ENCODE measurements at regions of chr14 and their contacts with region 1.

Region 1: DNA sequence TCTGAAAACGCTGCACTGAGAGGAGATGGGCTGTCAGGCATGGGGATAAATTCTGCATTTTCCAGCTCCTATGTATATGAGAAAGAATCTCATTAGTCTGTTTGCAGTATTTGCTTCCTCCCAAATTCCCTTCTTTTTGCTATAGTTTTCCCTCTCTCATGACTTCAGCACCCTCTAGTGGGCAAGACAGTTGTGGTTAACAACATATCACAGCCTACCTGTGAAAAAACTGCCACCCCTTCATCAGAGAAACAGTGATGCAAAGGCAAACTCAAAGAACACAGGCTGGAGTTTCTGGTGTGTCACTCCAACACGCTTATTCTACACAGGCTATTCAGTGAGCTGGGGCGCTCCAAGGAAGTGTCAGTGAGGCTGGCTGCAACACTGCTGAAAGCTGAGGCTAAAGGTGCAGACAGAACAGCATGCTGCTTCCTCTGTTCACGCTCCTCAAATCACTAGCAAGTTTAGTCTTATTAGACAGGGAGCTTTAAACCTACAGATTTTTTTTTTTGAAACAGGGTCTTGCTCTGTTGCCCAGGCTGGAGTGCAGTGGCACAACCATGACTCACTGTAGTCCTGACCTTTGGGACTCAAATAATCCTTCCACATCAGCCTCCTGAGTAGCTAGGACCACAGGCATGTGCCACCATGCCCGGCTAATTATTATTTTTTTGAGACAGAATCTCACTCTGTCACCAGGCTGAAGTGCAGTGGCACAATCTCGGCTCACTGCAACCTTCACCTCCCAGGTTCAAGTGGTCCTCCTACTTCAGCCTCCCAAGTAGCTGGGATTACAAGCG is 19.3 kb downstream of the ZC2HC1C start:
- DNase-seq: peak in 1 of 2 donors; percentile 9
- ATAC-seq: peak; percentile 44 to 58
- H3K4me3 ChIP-seq: no peak overlapping the region
- H3K27ac ChIP-seq: no peak overlapping the region
- H3K4me1 ChIP-seq: peaks cover 0 to 13% of the 10 kb centered on the region in 2 donors
- H3K27me3 ChIP-seq: no peaks in the 10 kb centered on the region
- CTCF ChIP-seq: peak; percentile 72 to 83 (median 77)
- POLR2A ChIP-seq: no peak

Region 2: GRCh38 chr14:74723134-74723533 is 365.6 kb before region 1 on chr14:
- in situ Hi-C with region 1: no loop called
- intact Hi-C with region 1: no loop called
- DNase-seq: no peak
- ATAC-seq: no peak
- H3K4me3 ChIP-seq: no peak overlapping the region
- H3K27ac ChIP-seq: peak overlapping the region in 1 of 4 donors; percentile 6
- H3K4me1 ChIP-seq: no peaks in the 10 kb centered on the region
- H3K27me3 ChIP-seq: no peaks in the 10 kb centered on the region
- CTCF ChIP-seq: no peak
- POLR2A ChIP-seq: no peak

Region 3: GRCh38 chr14:74913986-74914573 is 174.7 kb before region 1 on chr14:
- in situ Hi-C with region 1: loop called in 2 of 4 experiments (anchors 10 kb)
- intact Hi-C with region 1: loop called (anchors 2 kb)
- DNase-seq: peak; percentile 69 to 77
- ATAC-seq: peak; percentile 67 to 70
- H3K4me3 ChIP-seq: no peak overlapping the region
- H3K27ac ChIP-seq: peak overlapping the region; percentile 29 to 64 (median 52)
- H3K4me1 ChIP-seq: peaks cover 43 to 45% of the 10 kb centered on the region in 2 donors
- H3K27me3 ChIP-seq: no peaks in the 10 kb centered on the region
- CTCF ChIP-seq: peak; percentile 70 to 86 (median 82)
- POLR2A ChIP-seq: no peak

Region 4: GRCh38 chr14:75002392-75003249 is 86.2 kb before region 1 on chr14 and contains the start of gene EIF2B2:
- in situ Hi-C with region 1: no loop called
- intact Hi-C with region 1: loop called (anchors 5 kb)
- DNase-seq: peak; percentile 97 to 98
- ATAC-seq: peak; percentile 98 to 99
- H3K4me3 ChIP-seq: peak within 1 kb of the TSS; percentile 75 to 95 (median 89)
- H3K27ac ChIP-seq: peak within 1 kb of the TSS; percentile 82 to 94 (median 87)
- H3K4me1 ChIP-seq: peaks cover 12 to 14% of the 10 kb centered on the region in 2 donors
- H3K27me3 ChIP-seq: no peaks in the 10 kb centered on the region
- CTCF ChIP-seq: peak in 4 of 5 experiments; percentile 27 to 37 (median 33)
- POLR2A ChIP-seq: peak; percentile 67 to 80
- total RNA-seq, gene EIF2B2: 42.7 to 79.0 (median 69.9) TPM

Region 5: DNA sequence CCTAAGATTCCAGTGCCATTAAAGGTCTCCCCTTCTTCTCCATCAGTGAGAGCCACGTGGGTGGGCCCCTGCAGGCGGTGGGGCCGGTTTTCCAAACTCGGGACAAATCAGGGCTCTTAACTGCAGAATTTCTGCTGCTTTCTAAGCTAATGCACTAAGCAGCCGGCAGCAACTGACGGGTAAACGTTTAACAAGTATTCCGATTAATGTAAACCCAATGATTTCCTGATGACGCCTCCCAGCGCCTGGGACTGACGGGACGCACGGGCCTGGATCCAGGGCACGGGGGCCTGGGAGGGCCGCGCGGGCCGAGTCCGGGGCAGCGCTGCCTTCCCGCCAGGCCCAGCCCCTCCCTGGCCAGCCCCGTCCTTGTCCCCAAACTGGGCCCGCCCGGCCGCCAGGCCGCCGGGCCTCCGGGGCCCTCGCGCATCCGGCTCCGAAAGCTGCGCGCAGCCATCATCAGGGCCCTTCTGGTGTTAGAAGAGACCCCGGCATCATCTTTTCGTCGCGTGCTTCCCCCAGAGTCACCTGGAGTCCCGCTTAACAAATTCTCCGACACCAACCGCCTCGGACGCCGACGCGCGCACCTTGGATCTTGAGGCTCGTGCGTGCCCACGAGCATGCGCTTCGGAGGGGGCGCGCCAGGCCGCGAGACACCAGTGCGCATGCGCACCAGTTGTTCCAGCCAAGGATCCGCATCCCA is 37.8 kb before region 1 on chr14 and contains the start of gene MLH3:
- in situ Hi-C with region 1: no loop called
- intact Hi-C with region 1: loop called (anchors 5 kb)
- DNase-seq: peak; percentile 63 to 77
- ATAC-seq: peak; percentile 85 to 87
- H3K4me3 ChIP-seq: peak within 1 kb of the TSS; percentile 45 to 77 (median 60)
- H3K27ac ChIP-seq: peak within 1 kb of the TSS; percentile 81 to 91 (median 88)
- H3K4me1 ChIP-seq: peaks cover 21 to 36% of the 10 kb centered on the region in 2 donors
- H3K27me3 ChIP-seq: no peaks in the 10 kb centered on the region
- CTCF ChIP-seq: no peak
- POLR2A ChIP-seq: peak; percentile 63 to 69
- total RNA-seq, gene MLH3: 10.4 to 21.7 (median 17.4) TPM

Measured in gastrocnemius medialis (tissue), 4 donors.